ENCODE measurements at regions of chr20 and their contacts with region 1.

Region 1: DNA sequence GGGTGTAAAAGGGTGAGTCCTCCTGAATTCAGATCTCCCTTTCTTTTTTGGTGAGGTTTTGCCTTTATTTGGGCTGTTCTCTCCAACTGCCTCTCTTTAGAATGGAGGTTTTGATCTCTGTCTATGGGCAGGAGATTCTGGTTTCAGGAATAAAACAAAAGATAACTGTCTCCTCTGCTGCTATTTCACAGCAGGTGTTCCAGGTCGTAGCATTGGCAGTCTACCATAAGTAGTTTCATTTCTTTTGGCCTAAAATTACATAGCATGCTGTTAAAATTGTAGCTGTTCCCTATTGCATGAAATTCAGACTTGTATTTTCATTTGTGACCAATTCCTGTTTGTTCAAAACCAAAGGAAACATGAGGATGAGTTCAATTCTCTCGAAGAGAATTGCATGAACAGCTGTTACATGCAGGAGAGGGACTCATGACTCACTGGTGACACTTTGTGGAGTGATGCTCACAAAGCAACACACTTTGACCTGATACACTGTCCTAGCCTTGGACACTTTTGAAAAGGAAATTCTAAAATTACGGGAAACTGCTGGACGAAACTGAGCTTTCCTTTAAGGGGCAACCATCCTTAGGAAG is 76.8 kb upstream of the SIRPG start:
- DNase-seq: peak in 10 of 14 experiments; percentile 6 to 77 (median 26)
- ATAC-seq: peak; percentile 71
- H3K4me3 ChIP-seq: no peak overlapping the region
- H3K4me3 Mint-ChIP-seq: peak overlapping the region; percentile 40
- H3K27ac ChIP-seq: no peak overlapping the region
- H3K27ac Mint-ChIP-seq: no peak overlapping the region
- H3K4me1 ChIP-seq: peaks cover 28% of the 10 kb centered on the region
- H3K4me1 Mint-ChIP-seq: no peaks in the 10 kb centered on the region
- H3K27me3 ChIP-seq: peaks cover 0 to 3% of the 10 kb centered on the region in 2 experiments
- H3K27me3 Mint-ChIP-seq: no peaks in the 10 kb centered on the region
- CTCF ChIP-seq: peak; percentile 87

Region 2: GRCh38 chr20:1503564-1504227 is 230.7 kb before region 1 on chr20:
- CTCF ChIA-PET with region 1: interaction called, 24 read pairs
- POLR2A ChIA-PET with region 1: interaction called, 5 read pairs
- intact Hi-C with region 1: no loop called
- DNase-seq: peak; percentile 54 to 93 (median 69)
- ATAC-seq: peak; percentile 100
- H3K4me3 ChIP-seq: no peak overlapping the region
- H3K4me3 Mint-ChIP-seq: no peak overlapping the region
- H3K27ac ChIP-seq: no peak overlapping the region
- H3K27ac Mint-ChIP-seq: no peak overlapping the region
- H3K4me1 ChIP-seq: no peaks in the 10 kb centered on the region
- H3K4me1 Mint-ChIP-seq: peaks cover 5% of the 10 kb centered on the region
- H3K27me3 ChIP-seq: peaks cover 3 to 22% of the 10 kb centered on the region in 2 experiments
- H3K27me3 Mint-ChIP-seq: peaks cover 23% of the 10 kb centered on the region
- CTCF ChIP-seq: peak; percentile 98

Region 3: GRCh38 chr20:1535420-1536175 is 198.8 kb before region 1 on chr20:
- CTCF ChIA-PET with region 1: interaction called, 7 read pairs
- POLR2A ChIA-PET with region 1: no interaction called
- intact Hi-C with region 1: loop called (anchors 1 to 10 kb)
- DNase-seq: peak in 2 of 14 experiments; percentile 42
- ATAC-seq: no peak
- H3K4me3 ChIP-seq: no peak overlapping the region
- H3K4me3 Mint-ChIP-seq: no peak overlapping the region
- H3K27ac ChIP-seq: no peak overlapping the region
- H3K27ac Mint-ChIP-seq: no peak overlapping the region
- H3K4me1 ChIP-seq: peaks cover 3% of the 10 kb centered on the region
- H3K4me1 Mint-ChIP-seq: peaks cover 6% of the 10 kb centered on the region
- H3K27me3 ChIP-seq: no peaks in the 10 kb centered on the region
- H3K27me3 Mint-ChIP-seq: no peaks in the 10 kb centered on the region
- CTCF ChIP-seq: no peak

Region 4: DNA sequence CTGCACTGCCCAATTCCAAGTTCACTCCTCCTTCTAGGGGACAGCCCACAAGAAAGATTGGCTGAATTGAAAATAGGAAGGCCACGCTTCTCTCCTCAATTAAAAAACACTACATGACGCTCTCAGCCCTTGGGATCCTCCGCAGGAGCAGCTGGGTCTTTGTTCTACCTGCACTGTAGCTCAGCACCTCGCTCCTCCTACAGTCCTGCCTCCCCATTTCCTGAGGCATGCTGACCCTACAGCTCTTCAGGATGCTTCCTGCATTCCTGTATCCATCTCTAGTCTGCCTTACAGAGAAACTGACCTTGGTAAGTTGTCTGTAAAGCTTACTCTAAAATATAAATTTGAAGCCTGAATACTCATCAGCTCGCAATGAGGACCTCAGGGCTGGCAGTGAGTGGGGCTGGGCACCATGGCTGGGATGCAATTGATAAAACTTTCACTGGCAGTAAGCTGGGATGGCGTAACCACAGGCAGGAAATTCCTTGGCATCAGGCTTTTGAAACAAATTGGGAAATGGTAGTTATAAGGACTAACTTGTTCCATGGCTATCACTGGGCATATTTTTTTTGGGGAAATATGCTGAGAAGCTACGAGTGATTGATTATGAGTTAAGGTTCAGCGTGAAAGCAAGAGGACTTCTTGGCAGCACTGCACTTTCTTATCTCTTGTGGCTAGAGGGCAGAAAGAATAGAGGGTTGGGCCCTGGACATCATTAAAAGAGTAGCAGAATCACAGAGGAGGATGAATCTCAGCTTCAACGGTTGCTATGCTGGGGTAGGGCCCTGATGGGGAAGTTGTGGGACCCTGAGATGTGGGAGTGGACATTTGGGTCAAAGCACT is 102.8 kb before region 1 on chr20:
- CTCF ChIA-PET with region 1: no interaction called
- POLR2A ChIA-PET with region 1: no interaction called
- intact Hi-C with region 1: loop called in 1 of 2 experiments (anchors 5 kb)
- DNase-seq: no peak
- ATAC-seq: no peak
- H3K4me3 ChIP-seq: no peak overlapping the region
- H3K4me3 Mint-ChIP-seq: peak overlapping the region; percentile 66
- H3K27ac ChIP-seq: peak overlapping the region; percentile 31 to 68
- H3K27ac Mint-ChIP-seq: peak overlapping the region; percentile 92
- H3K4me1 ChIP-seq: peaks cover 39% of the 10 kb centered on the region
- H3K4me1 Mint-ChIP-seq: peaks cover 60% of the 10 kb centered on the region
- H3K27me3 ChIP-seq: no peaks in the 10 kb centered on the region
- H3K27me3 Mint-ChIP-seq: no peaks in the 10 kb centered on the region
- CTCF ChIP-seq: no peak

Region 5: GRCh38 chr20:1685304-1686052 is 48.9 kb before region 1 on chr20:
- CTCF ChIA-PET with region 1: interaction called, 6 read pairs
- POLR2A ChIA-PET with region 1: no interaction called
- intact Hi-C with region 1: loop called (anchors 5 to 10 kb)
- DNase-seq: peak in 1 of 14 experiments; percentile 37
- ATAC-seq: peak; percentile 43
- H3K4me3 ChIP-seq: peak overlapping the region; percentile 49
- H3K4me3 Mint-ChIP-seq: peak overlapping the region; percentile 88
- H3K27ac ChIP-seq: peak overlapping the region; percentile 64 to 66
- H3K27ac Mint-ChIP-seq: peak overlapping the region; percentile 86
- H3K4me1 ChIP-seq: peaks cover 31% of the 10 kb centered on the region
- H3K4me1 Mint-ChIP-seq: peaks cover 90% of the 10 kb centered on the region
- H3K27me3 ChIP-seq: no peaks in the 10 kb centered on the region
- H3K27me3 Mint-ChIP-seq: no peaks in the 10 kb centered on the region
- CTCF ChIP-seq: no peak

Measured in CD4-positive, alpha-beta T cell (primary cell).